Activated CD4-positive, alpha-beta memory T cell treated with anti-CD3 and anti-CD28 coated beads, Interleukin-2, amount 10 ng/mL, durations not matched to agents 7 days and 5 days (primary cell): ENCODE measurements at regions of chr10 and their contacts with region 1.

Region 1: GRCh38 chr10:103772096-103772845 is 83.1 kb downstream of the SH3PXD2A start:
- DNase-seq: peak; percentile 78
- H3K4me3 Mint-ChIP-seq: peak overlapping the region; percentile 79
- H3K27ac Mint-ChIP-seq: peak overlapping the region; percentile 90
- H3K4me1 Mint-ChIP-seq: peaks cover 40% of the 10 kb centered on the region
- H3K27me3 Mint-ChIP-seq: peaks cover 6% of the 10 kb centered on the region

Region 2: GRCh38 chr10:103720328-103720963 is 51.8 kb before region 1 on chr10:
- CTCF ChIA-PET with region 1: no interaction called
- POLR2A ChIA-PET with region 1: no interaction called
- DNase-seq: no peak
- H3K4me3 Mint-ChIP-seq: no peak overlapping the region
- H3K27ac Mint-ChIP-seq: no peak overlapping the region
- H3K4me1 Mint-ChIP-seq: no peaks in the 10 kb centered on the region
- H3K27me3 Mint-ChIP-seq: peaks cover 4% of the 10 kb centered on the region

Region 3: DNA sequence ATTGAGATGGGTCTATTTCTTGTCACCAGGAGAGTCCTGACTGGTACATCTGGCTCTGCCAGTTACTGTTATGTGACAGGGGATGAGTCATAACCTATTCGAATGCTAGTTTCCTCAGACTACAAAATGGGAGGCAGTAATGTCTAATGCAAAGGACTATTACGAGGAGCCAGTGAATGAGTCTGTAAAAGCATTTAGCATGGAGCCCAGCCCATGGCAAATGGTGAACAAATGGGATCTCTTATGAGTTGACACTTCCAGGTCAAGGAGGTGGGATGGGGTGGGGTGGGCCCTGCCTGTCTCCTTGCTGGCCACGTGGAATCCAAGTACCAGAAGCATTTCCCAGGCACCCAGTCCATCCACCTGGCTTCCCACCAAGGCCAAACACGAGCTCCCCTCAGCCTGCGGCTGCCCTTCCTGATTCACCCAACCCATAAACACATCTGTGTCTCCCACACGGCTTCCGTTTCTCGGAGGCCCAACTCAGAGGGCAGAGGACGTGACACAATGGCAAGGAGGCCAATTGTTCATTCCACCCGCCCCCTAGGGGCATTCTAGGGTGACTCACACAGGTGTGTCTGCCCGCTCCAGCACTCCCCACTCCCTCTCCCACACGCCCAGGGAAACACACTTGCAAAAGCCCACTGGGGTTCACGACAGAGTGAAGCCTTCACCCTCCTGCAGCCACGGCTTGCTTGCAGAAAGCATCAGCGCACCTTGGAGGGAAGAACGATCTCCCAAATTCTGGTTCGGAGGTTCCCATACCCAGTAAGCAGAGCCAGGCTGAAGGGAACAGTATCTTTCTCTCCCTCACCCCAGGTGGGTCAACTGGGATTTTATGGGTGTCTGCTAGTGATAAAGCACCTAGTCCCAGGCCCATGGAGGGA is 26.7 kb before region 1 on chr10:
- CTCF ChIA-PET with region 1: interaction called, 15 read pairs
- POLR2A ChIA-PET with region 1: interaction called, 24 read pairs
- DNase-seq: peak; percentile 79
- H3K4me3 Mint-ChIP-seq: peak overlapping the region; percentile 62
- H3K27ac Mint-ChIP-seq: peak overlapping the region; percentile 93
- H3K4me1 Mint-ChIP-seq: peaks cover 57% of the 10 kb centered on the region
- H3K27me3 Mint-ChIP-seq: no peaks in the 10 kb centered on the region

Region 4: GRCh38 chr10:103752680-103753248 is 19.5 kb before region 1 on chr10:
- CTCF ChIA-PET with region 1: interaction called, 30 read pairs
- POLR2A ChIA-PET with region 1: interaction called, 25 read pairs
- DNase-seq: peak; percentile 29
- H3K4me3 Mint-ChIP-seq: no peak overlapping the region
- H3K27ac Mint-ChIP-seq: no peak overlapping the region
- H3K4me1 Mint-ChIP-seq: peaks cover 48% of the 10 kb centered on the region
- H3K27me3 Mint-ChIP-seq: no peaks in the 10 kb centered on the region

Region 5: DNA sequence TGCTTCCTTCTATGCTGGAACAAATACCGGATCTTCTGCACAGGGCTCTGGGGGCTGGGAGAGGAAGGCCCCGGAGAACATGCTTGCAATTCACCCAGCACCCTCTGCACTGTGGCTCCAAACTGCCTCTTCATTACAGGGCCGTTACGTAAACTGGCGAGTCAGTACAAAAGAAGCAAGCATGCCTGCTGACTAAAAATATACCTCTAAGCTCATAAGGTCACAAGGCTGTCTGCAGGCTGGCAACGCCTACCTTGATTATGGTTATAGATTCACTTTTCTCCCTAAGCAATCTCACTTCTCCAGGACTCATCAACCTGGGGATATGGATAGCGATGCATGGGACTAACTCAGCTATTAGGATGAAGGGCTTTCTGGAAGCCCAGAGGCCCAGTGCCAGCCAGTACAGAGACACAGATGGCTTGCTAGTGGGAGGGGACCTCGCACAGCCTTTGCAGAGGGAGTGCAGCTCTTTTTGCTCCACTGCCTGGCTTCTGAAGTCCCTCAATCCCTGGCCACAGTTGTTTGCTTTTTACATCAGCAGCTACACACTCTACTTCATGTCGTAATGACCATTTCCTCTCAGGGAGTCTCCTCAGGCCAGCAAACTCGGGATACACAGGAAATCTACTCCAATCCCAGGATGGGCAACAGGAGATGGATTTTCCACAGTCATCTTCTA is 13.0 kb before region 1 on chr10:
- CTCF ChIA-PET with region 1: interaction called, 30 read pairs
- POLR2A ChIA-PET with region 1: interaction called, 25 read pairs
- DNase-seq: peak; percentile 51
- H3K4me3 Mint-ChIP-seq: no peak overlapping the region
- H3K27ac Mint-ChIP-seq: peak overlapping the region; percentile 75
- H3K4me1 Mint-ChIP-seq: peaks cover 67% of the 10 kb centered on the region
- H3K27me3 Mint-ChIP-seq: no peaks in the 10 kb centered on the region

Region 6: GRCh38 chr10:103818105-103818504 is 45.8 kb after region 1 on chr10:
- CTCF ChIA-PET with region 1: no interaction called
- POLR2A ChIA-PET with region 1: no interaction called
- DNase-seq: no peak
- H3K4me3 Mint-ChIP-seq: no peak overlapping the region
- H3K27ac Mint-ChIP-seq: no peak overlapping the region
- H3K4me1 Mint-ChIP-seq: peaks cover 4% of the 10 kb centered on the region
- H3K27me3 Mint-ChIP-seq: peaks cover 27% of the 10 kb centered on the region

Region 7: DNA sequence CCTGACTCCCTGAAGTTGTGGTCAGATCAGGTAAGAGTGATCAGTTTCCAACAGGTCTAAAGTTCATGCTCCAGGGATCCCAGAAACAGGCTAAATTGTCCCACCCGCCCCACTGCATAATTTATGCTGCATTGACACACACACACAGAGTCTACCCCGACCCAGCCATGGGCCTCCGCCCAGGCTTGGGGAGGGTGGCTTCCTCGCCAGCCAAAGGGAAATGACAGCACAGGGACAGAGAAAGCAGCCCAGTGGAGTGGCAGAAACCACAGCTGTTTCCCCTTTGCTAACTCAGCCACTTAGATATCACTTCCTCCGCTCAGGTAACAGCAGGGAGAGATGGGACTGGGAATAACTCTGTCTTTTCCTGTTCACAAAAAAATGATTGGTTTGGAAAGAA is 73.7 kb after region 1 on chr10:
- CTCF ChIA-PET with region 1: interaction called, 10 read pairs
- POLR2A ChIA-PET with region 1: interaction called, 3 read pairs
- DNase-seq: peak; percentile 76
- H3K4me3 Mint-ChIP-seq: peak overlapping the region; percentile 18
- H3K27ac Mint-ChIP-seq: peak overlapping the region; percentile 85
- H3K4me1 Mint-ChIP-seq: peaks cover 46% of the 10 kb centered on the region
- H3K27me3 Mint-ChIP-seq: peaks cover 25% of the 10 kb centered on the region